ENCODE measurements at regions of chr5 and their contacts with region 1.

Region 1: GRCh38 chr5:102681407-102681983 is 73.6 kb upstream of the PAM start:
- DNase-seq: peak; percentile 65
- ATAC-seq: peak; percentile 79
- H3K4me3 Mint-ChIP-seq: no peak overlapping the region
- H3K27ac Mint-ChIP-seq: no peak overlapping the region
- H3K4me1 Mint-ChIP-seq: no peaks in the 10 kb centered on the region
- H3K27me3 Mint-ChIP-seq: peaks cover 9% of the 10 kb centered on the region

Region 2: GRCh38 chr5:102211165-102211564 is 470.3 kb before region 1 on chr5:
- CTCF ChIA-PET with region 1: no interaction called
- DNase-seq: no peak
- ATAC-seq: no peak
- H3K4me3 Mint-ChIP-seq: no peak overlapping the region
- H3K27ac Mint-ChIP-seq: no peak overlapping the region
- H3K4me1 Mint-ChIP-seq: no peaks in the 10 kb centered on the region
- H3K27me3 Mint-ChIP-seq: no peaks in the 10 kb centered on the region

Region 3: GRCh38 chr5:102823441-102823874 is 142.0 kb after region 1 on chr5:
- CTCF ChIA-PET with region 1: no interaction called
- DNase-seq: no peak
- ATAC-seq: no peak
- H3K4me3 Mint-ChIP-seq: no peak overlapping the region
- H3K27ac Mint-ChIP-seq: no peak overlapping the region
- H3K4me1 Mint-ChIP-seq: peaks cover 5% of the 10 kb centered on the region
- H3K27me3 Mint-ChIP-seq: no peaks in the 10 kb centered on the region

Region 4: GRCh38 chr5:102971697-102972293 is 290.3 kb after region 1 on chr5:
- CTCF ChIA-PET with region 1: interaction called, 17 read pairs
- DNase-seq: no peak
- ATAC-seq: peak; percentile 36
- H3K4me3 Mint-ChIP-seq: no peak overlapping the region
- H3K27ac Mint-ChIP-seq: no peak overlapping the region
- H3K4me1 Mint-ChIP-seq: no peaks in the 10 kb centered on the region
- H3K27me3 Mint-ChIP-seq: no peaks in the 10 kb centered on the region

Region 5: DNA sequence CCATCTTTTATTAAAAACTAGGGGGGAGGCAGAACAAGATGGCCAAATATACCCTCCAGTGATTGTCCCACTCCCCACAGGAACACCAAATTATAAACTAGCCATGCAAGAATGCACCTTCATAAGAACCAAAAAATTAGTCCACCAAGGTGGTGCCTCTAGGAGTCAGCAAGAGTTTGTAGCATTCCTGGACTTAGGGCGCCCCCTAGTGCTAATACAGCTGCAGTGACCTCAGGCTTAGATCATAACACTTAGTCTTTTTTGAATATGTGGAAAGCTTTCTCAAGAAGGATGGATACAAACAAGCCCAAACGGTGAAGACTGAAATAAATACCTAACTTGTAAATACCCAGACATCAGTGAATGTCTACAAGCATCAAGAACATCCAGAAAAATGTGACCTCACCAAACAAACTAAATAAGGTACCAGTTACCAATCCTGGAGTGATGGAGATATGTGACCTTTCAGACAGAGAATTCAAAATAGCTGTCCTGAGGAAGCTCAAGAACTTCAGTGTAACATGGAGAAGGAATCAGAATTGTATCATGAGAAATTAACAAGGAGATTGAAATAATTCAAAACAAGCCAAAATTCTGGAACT is 457.9 kb after region 1 on chr5:
- CTCF ChIA-PET with region 1: interaction called, 14 read pairs
- DNase-seq: peak; percentile 85
- ATAC-seq: peak; percentile 96
- H3K4me3 Mint-ChIP-seq: no peak overlapping the region
- H3K27ac Mint-ChIP-seq: no peak overlapping the region
- H3K4me1 Mint-ChIP-seq: peaks cover 2% of the 10 kb centered on the region
- H3K27me3 Mint-ChIP-seq: no peaks in the 10 kb centered on the region

Region 6: DNA sequence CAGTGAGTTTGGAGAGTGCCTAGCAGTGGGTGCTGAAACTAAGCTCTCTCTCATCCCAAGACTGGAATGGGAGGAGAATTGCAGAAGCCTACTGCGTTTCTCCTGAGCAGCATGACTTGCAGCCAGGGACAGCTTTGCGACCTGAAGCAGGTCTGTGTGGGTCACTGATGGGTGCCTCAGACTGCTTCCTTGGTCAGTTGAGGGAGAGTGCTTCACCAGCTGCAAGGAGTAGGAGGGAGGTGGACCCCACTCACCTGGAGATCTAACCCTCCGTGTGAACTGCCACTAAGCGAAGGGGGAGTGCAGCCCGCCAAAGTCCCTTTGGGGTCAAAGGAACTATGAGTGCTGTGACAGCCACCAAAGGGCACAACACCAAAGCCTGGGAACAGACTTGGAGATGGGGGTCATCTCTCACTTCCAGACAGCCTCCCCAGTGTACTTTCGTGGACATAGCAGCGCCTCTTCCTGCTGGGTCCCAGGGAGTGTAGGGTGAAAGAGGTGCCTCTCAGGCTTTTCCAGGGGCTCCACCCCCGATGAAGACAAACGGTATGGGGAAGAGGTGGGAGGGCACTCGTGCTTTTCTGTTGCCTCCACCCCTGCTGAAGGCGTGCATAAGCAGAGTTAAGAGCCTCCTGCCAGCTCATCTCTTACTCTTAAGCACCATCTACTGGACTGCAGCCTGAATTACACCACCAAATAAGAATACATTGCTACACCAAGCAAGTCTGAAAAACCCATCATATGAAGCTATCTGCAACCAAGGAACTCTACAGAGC is 542.8 kb after region 1 on chr5:
- CTCF ChIA-PET with region 1: interaction called, 15 read pairs
- DNase-seq: peak; percentile 73
- ATAC-seq: peak; percentile 97
- H3K4me3 Mint-ChIP-seq: no peak overlapping the region
- H3K27ac Mint-ChIP-seq: no peak overlapping the region
- H3K4me1 Mint-ChIP-seq: peaks cover 9% of the 10 kb centered on the region
- H3K27me3 Mint-ChIP-seq: peaks cover 41% of the 10 kb centered on the region